Posterior cingulate gyrus (tissue), 11 donors: ENCODE measurements at regions of chr3 and their contacts with region 1.

Region 1: GRCh38 chr3:183895296-183895695 is 10.6 kb upstream of the PARL start:
- DNase-seq: peak in 1 of 10 donors; percentile 45

Region 2: GRCh38 chr3:183912895-183913579 is 17.7 kb after region 1 on chr3:
- intact Hi-C with region 1: no loop called
- DNase-seq: peak in 1 of 10 donors; percentile 28

Region 3: GRCh38 chr3:183959214-183959613 is 63.9 kb after region 1 on chr3:
- intact Hi-C with region 1: no loop called
- DNase-seq: no peak

Region 4: DNA sequence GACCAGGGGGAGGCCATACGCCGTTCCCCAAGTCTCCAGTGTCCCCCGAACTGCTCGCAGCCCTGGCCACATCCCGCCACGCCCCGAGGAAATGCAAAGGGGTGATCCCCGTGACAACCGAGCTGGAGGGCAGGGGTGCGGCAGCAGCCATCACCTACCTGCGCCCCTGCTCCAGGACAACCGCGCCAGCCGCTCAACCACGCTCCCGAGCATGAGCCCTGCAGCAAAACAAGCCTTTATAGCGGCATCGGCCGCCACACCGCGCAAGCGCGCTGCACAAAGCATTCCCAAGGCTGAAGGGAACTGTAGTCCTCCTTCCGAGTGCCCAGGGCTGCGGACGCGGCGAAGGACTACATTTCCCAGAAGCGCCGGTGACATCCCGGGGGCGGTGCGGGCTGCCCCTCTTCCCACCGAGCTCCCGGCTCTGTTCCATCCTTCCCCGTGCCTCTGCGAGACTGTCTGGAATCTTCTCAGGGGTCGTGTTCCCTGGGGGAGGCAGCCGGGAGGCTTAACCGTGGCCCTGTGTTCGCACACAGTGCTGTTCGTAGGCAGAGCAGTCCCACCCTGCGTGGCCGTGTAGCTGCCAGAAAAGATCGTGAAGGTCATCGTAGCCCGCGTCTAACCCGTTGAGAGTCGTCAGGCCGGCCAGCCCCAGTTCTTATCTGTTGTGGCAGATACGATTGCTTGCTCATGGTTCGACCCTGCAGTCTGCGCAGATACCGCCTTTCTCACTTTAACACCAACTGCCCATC is 122.6 kb after region 1 on chr3 and contains the start of gene ABCC5:
- intact Hi-C with region 1: loop called (anchors 2 kb)
- DNase-seq: peak; percentile 92 to 99 (median 95)

Region 5: GRCh38 chr3:184135149-184135910 is 240.0 kb after region 1 on chr3 and contains the start of gene EIF2B5:
- intact Hi-C with region 1: loop called (anchors 10 kb)
- DNase-seq: peak; percentile 91 to 99 (median 94)

Region 6: GRCh38 chr3:184250167-184250828 is 355.0 kb after region 1 on chr3:
- intact Hi-C with region 1: loop called (anchors 10 kb)
- DNase-seq: peak in 7 of 10 donors; percentile 76 to 95 (median 83)

Region 7: DNA sequence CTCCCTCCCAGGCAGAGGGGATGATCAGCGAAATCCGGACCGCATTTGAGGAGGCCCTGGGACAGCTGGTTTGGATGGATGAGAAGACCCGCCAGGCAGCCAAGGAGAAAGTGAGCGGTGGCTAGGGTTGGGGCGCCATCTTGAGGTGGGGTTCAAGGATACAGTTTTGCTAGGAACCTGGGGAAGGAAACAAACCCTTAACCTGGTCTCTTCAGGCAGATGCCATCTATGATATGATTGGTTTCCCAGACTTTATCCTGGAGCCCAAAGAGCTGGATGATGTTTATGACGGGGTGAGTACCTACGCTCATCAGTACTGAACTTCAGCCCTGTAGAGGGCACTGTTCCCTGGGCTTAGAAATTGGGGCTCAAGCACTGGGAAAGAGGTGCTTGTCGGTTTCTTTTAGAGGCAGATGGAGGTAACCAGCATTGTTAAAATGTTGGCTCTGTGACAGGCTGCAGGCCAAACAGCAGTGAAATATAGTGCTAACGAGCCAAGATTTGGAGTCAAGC is 394.2 kb after region 1 on chr3:
- intact Hi-C with region 1: loop called (anchors 1 kb)
- DNase-seq: peak in 9 of 10 donors; percentile 26 to 93 (median 60)